SK-N-SH (cell line): ENCODE measurements at regions of chr22 and their contacts with region 1.

Region 1: DNA sequence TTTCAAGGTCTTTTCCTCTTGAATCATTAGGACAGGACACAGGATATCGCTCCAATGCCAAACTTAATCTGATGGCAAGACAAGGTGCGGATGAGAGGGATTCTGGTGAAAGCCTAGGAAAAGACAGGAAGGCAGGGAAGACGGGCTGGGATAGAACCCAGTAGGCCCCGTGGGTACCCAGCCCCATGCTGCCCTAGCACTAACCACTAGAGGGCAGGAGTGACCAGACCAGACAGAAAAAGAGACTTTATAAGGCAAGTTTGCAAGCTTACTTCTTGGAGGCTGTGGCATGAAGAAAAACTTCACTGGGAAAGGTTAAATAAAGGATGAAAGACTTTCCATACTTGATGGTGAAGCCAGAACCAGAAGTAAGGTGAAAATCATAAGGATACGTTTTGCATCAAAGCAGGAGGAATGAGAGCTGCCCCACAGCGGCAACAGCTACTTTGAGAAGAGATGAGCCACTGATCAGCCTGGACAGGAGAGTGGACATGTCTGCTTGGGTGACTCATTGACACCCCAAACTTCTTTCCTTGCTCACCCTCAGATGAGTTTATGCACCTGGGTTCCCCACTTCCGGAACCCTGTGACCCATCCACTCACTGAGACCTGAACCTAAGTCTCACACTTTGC is 39.8 kb downstream of the SYN3 start:
- DNase-seq: peak; percentile 80
- H3K4me3 ChIP-seq: no peak overlapping the region; a peak in 1 of 4 replicates
- H3K27ac ChIP-seq: no peak overlapping the region
- H3K4me1 ChIP-seq: no peaks in the 10 kb centered on the region
- H3K27me3 ChIP-seq: no peaks in the 10 kb centered on the region
- CTCF ChIP-seq: peak; percentile 83
- EP300 ChIP-seq: no peak
- RAD21 ChIP-seq: peak; percentile 87

Region 2: GRCh38 chr22:32991353-32992121 is 26.8 kb before region 1 on chr22:
- CTCF ChIA-PET with region 1: interaction called, 10 read pairs
- POLR2A ChIA-PET with region 1: no interaction called
- DNase-seq: peak; percentile 49
- H3K4me3 ChIP-seq: no peak overlapping the region
- H3K27ac ChIP-seq: peak overlapping the region in 1 of 2 experiments; percentile 56; a peak in 2 of 4 replicates
- H3K4me1 ChIP-seq: peaks cover 0 to 24% of the 10 kb centered on the region in 2 experiments; a peak in 1 of 4 replicates
- H3K27me3 ChIP-seq: no peaks in the 10 kb centered on the region
- CTCF ChIP-seq: no peak
- EP300 ChIP-seq: no peak
- RAD21 ChIP-seq: no peak

Region 3: DNA sequence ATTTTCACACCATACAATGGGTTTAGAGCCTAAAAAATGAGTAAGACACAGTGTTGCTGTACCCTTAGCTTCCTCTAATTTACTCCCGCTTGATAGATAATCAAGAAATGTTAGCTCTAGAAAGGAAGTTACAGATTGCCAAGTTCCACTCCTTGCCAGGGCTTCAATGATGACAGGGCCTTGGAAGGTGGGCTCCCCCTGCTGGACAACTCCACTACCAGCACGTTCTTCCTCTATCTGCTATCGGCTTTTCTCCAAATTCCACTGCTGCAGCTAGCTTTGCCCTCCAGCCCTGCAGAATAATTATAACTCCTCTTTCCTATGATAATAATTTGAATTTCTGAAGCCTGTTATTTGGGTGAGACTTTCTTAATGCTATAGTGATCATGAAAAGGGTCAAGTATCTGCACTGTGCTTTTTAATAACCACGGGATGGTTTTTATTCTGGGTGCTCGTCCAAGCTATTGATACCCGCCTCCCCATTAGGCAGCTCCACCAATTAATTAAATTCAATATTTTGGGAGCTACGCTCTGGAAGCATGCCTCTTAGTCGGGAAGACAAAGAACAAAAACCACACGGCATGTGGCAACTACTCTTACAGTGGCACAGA is 30.9 kb after region 1 on chr22:
- CTCF ChIA-PET with region 1: interaction called, 411 read pairs
- POLR2A ChIA-PET with region 1: no interaction called
- DNase-seq: peak; percentile 78
- H3K4me3 ChIP-seq: no peak overlapping the region; a peak in 1 of 4 replicates
- H3K27ac ChIP-seq: no peak overlapping the region
- H3K4me1 ChIP-seq: no peaks in the 10 kb centered on the region
- H3K27me3 ChIP-seq: no peaks in the 10 kb centered on the region
- CTCF ChIP-seq: peak; percentile 86
- EP300 ChIP-seq: no peak
- RAD21 ChIP-seq: peak; percentile 72

Region 4: DNA sequence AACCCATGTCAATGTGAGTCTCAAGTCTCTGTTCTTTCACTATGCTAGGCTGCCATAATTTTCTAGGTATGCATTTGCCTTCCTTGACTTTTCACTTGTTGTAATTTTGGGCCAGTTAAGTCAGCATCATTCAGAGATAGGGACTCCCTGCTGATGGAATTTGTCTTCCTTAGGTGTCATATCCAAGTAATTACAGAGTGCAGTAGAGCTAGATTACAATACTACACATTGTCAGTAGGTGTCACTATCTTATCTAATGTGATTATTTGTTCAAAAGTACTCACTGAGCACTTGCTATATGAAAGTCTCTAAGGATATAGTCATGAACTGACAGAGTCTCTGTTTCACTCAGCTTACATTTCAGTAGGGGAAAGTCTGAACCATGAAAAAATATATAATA is 64.9 kb after region 1 on chr22:
- CTCF ChIA-PET with region 1: interaction called, 10 read pairs
- POLR2A ChIA-PET with region 1: no interaction called
- DNase-seq: no peak
- H3K4me3 ChIP-seq: no peak overlapping the region
- H3K27ac ChIP-seq: no peak overlapping the region
- H3K4me1 ChIP-seq: peaks cover 0 to 2% of the 10 kb centered on the region in 2 experiments; a peak in 1 of 4 replicates
- H3K27me3 ChIP-seq: no peaks in the 10 kb centered on the region
- CTCF ChIP-seq: no peak
- EP300 ChIP-seq: no peak
- RAD21 ChIP-seq: no peak

Region 5: DNA sequence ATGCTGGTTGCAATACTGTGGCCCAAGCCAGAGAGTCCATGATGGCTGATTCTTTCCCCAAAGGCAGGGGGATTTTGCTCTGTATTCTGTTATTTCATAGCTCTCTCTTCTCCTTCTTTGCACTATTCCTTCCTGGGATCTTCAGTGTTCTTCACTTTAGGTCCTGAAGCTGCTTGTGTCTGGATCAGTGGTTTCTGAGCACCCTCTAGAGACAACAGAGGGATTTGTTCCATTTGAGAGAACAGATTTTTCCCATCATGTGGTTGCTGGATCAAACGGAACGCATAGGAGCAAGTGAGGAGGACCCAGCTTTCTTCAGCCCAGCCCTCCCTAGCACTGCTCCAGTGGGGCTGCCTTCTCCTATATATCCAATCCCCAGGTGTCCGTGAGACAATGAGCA is 108.5 kb after region 1 on chr22:
- CTCF ChIA-PET with region 1: interaction called, 106 read pairs
- POLR2A ChIA-PET with region 1: interaction called, 3 read pairs
- DNase-seq: peak; percentile 52
- H3K4me3 ChIP-seq: no peak overlapping the region
- H3K27ac ChIP-seq: no peak overlapping the region
- H3K4me1 ChIP-seq: no peaks in the 10 kb centered on the region
- H3K27me3 ChIP-seq: no peaks in the 10 kb centered on the region
- CTCF ChIP-seq: no peak
- EP300 ChIP-seq: no peak
- RAD21 ChIP-seq: peak; percentile 85

Region 6: DNA sequence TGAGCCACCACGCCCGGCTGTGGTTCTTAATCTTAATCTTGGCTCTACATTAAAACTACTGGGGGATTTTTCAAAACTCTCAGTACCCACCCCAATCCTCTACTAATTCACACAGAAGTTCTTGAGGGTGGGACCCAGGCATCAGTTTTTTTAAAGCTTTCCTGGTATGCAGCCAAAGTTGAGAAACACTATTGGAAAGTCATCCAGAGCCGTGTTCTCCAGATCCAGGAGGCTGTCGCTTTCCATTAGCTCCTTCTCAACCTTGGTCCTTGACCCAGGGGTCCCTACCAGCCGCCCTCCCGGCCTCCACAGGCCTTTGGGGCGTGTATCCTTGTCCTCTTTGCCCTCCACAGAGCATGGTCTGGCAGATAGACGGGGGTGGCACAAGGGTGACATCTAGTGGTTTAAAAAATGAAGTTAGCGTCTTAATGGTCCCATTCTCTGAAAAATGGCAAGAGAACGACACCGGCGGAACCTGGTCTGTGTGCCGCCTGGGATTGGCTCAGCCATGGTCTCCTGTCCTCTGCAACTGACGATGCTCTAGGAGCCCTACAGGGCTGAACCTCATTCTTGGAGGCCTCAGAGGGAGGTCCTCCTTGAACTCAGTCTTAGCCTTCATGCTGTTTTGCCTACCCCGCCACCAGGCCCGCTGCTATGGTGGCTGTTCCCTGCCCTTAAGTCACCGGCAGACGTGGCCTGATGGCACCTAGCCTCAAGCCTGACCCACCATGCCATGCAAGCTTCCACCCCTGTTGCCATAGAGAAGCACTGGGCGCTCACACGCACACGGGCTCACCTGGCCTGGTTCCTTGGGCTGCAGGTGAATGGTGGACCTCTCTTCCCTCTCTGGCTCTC is 191.8 kb after region 1 on chr22:
- CTCF ChIA-PET with region 1: interaction called, 69 read pairs
- POLR2A ChIA-PET with region 1: no interaction called
- DNase-seq: peak; percentile 68
- H3K4me3 ChIP-seq: no peak overlapping the region; a peak in 1 of 4 replicates
- H3K27ac ChIP-seq: no peak overlapping the region
- H3K4me1 ChIP-seq: no peaks in the 10 kb centered on the region
- H3K27me3 ChIP-seq: no peaks in the 10 kb centered on the region
- CTCF ChIP-seq: peak; percentile 45
- EP300 ChIP-seq: no peak
- RAD21 ChIP-seq: peak; percentile 68